ENCODE measurements at regions of chr11 and their contacts with region 1.

Region 1: GRCh38 chr11:65274735-65275682 is 13.2 kb downstream of the POLA2 start:
- DNase-seq: peak; percentile 89 to 97
- H3K4me3 ChIP-seq: no peak overlapping the region
- H3K27ac ChIP-seq: peak overlapping the region; percentile 60
- H3K4me1 ChIP-seq: peaks cover 39% of the 10 kb centered on the region
- H3K27me3 ChIP-seq: no peaks in the 10 kb centered on the region
- CTCF ChIP-seq: peak; percentile 95

Region 2: GRCh38 chr11:64878494-64879243 is 396.3 kb before region 1 on chr11 and contains the start of gene EHD1:
- CTCF ChIA-PET with region 1: interaction called, 15 read pairs
- POLR2A ChIA-PET with region 1: no interaction called
- intact Hi-C with region 1: no loop called
- DNase-seq: peak; percentile 92 to 99
- H3K4me3 ChIP-seq: peak within 1 kb of the TSS; percentile 98
- H3K27ac ChIP-seq: peak within 1 kb of the TSS; percentile 80
- H3K4me1 ChIP-seq: peaks cover 28% of the 10 kb centered on the region
- H3K27me3 ChIP-seq: no peaks in the 10 kb centered on the region
- CTCF ChIP-seq: peak; percentile 39
- total RNA-seq, gene EHD1: 110 and 134 TPM in 2 replicates

Region 3: GRCh38 chr11:65194564-65194963 is 80.4 kb before region 1 on chr11:
- CTCF ChIA-PET with region 1: interaction called, 16 read pairs
- POLR2A ChIA-PET with region 1: no interaction called
- intact Hi-C with region 1: no loop called
- DNase-seq: no peak
- H3K4me3 ChIP-seq: no peak overlapping the region
- H3K27ac ChIP-seq: no peak overlapping the region
- H3K4me1 ChIP-seq: peaks cover 30% of the 10 kb centered on the region
- H3K27me3 ChIP-seq: no peaks in the 10 kb centered on the region
- CTCF ChIP-seq: no peak

Region 4: GRCh38 chr11:65314501-65315203 is 39.6 kb after region 1 on chr11 and contains the start of gene CDC42EP2:
- CTCF ChIA-PET with region 1: interaction called, 151 read pairs
- POLR2A ChIA-PET with region 1: interaction called, 57 read pairs
- intact Hi-C with region 1: loop called (anchors 1 kb)
- DNase-seq: peak; percentile 70 to 94
- H3K4me3 ChIP-seq: peak within 1 kb of the TSS; percentile 90
- H3K27ac ChIP-seq: peak within 1 kb of the TSS; percentile 54
- H3K4me1 ChIP-seq: peaks cover 66% of the 10 kb centered on the region
- H3K27me3 ChIP-seq: no peaks in the 10 kb centered on the region
- CTCF ChIP-seq: no peak
- total RNA-seq, gene CDC42EP2: 17.8 and 20.8 TPM in 2 replicates

Region 5: DNA sequence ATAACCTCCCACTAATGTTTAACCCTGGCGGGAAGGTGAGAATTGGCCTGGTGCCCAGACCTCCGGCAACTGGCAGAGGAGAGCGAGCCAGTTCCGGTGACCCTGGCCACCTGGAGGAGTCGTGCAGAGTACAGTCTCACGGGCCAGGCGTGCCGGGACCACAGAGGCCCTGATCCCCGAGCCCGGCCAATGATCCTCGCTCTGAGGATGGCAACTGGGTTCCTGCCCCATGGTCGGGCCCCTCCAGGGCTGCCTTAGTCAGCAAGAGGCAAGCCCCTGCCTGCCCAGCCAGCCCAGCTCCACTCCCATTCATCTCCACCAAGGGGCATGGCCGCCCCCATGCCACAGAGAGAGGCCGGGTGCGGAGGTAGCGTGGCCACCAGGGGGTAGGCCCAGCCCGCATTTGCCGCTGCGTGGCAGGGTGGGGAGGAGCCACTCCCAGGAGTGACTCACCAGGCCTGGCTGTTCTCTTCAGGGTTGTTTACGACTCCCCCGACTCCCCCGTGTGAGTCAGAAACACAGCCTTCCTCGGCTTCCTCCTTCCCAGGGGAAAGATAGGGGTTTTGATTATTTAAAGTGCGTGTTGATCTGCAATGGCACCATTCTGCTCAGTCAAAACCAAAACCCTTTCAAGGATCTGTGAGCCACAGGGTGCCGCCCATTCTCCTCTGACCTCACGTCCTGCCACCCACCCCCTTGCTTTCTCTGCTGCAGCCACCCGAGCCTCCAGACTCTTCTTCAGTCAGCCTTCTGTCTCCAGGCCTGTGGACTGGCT is 107.2 kb after region 1 on chr11 and contains the start of gene SLC25A45:
- CTCF ChIA-PET with region 1: interaction called, 10 read pairs
- POLR2A ChIA-PET with region 1: no interaction called
- intact Hi-C with region 1: no loop called
- DNase-seq: peak; percentile 97 to 98
- H3K4me3 ChIP-seq: peak within 1 kb of the TSS; percentile 48; the same call in 1 of the 2 replicates
- H3K27ac ChIP-seq: peak within 1 kb of the TSS; percentile 93
- H3K4me1 ChIP-seq: peaks cover 64% of the 10 kb centered on the region
- H3K27me3 ChIP-seq: no peaks in the 10 kb centered on the region
- CTCF ChIP-seq: peak; percentile 79
- total RNA-seq, gene SLC25A45: 9.5 and 9.8 TPM in 2 replicates

Region 6: GRCh38 chr11:65569973-65570918 is 295.2 kb after region 1 on chr11 and contains the start of gene ZNRD2:
- CTCF ChIA-PET with region 1: no interaction called
- POLR2A ChIA-PET with region 1: interaction called, 11 read pairs
- intact Hi-C with region 1: no loop called
- DNase-seq: peak; percentile 98 to 99
- H3K4me3 ChIP-seq: peak within 1 kb of the TSS; percentile 73
- H3K27ac ChIP-seq: peak within 1 kb of the TSS; percentile 68
- H3K4me1 ChIP-seq: peaks cover 54% of the 10 kb centered on the region
- H3K27me3 ChIP-seq: no peaks in the 10 kb centered on the region
- CTCF ChIP-seq: peak; percentile 57
- total RNA-seq, gene ZNRD2: 51.4 and 53.5 TPM in 2 replicates